ENCODE measurements at regions of chr19 and their contacts with region 1.

Region 1: DNA sequence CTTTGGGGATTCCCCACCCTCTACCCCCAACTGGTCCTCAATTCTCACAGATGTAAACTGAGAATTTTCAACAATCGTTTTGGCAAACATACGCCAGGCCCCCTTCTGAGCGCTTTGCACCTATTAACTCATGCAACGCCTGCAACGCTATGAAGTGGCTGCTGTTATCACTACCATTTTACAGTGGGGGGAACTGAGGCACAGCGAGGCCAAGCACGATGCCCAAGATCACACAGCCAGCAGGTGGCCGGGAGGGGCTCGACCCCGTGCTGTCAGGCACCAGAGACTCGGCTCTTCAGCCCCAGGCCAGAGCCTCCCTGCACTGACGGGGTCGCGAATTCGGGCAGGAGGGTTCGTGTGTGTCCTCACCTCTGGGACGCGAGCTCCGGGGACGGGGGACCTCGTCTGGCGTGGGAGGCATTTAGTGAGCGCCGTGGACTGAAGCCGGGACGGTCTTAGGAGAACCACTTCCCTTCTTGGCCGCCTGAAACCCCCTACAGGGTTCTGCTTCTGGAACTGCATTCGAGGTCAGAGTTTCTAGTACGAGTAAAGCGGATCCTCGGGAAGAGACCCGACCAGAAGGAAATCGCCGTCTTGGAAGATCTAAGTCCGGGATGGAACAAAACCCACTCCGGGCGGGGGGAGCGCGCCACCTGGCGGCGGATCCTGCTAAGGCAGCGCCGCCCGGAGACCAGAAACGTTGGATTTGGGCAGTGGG is 21.0 kb downstream of the ZNF114 start:
- DNase-seq: no peak
- H3K4me3 ChIP-seq: peak overlapping the region; percentile 61
- CTCF ChIP-seq: peak; percentile 95

Region 2: GRCh38 chr19:48255376-48256303 is 35.3 kb before region 1 on chr19 and contains the start of gene CARD8:
- CTCF ChIA-PET with region 1: interaction called, 13 read pairs
- POLR2A ChIA-PET with region 1: no interaction called
- DNase-seq: no peak
- H3K4me3 ChIP-seq: peak within 1 kb of the TSS; percentile 84
- CTCF ChIP-seq: no peak

Region 3: DNA sequence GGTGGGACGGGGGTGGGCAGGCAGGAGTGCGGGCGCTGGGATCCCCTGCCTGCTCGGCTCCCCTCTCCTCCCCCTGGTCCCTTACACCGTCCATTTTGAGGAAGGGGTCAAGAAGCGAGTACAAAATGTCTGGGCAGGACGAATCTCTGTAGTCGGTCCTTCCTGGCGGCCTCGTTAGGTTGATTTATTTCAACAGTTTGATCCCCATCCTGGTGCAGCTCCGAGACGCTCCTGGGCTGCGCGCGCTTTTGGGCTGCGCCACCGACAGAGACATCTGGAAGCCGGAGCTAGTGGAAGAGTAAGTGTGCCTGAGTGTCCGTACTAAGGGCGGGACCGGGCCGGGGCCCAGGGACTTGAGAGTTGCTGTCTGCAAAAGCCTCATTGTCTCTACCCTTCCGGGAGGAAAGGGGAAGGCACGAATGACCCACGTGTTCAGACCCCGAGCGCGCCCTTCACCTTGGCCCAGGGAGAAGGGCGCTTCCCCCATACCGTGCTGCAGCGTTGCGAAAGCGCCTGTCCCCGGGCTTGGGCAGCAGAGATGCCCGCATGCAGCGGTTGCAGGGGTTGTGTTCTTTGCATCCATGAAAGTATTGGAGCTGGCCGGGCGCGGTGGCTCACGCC is 19.3 kb before region 1 on chr19:
- CTCF ChIA-PET with region 1: interaction called, 429 read pairs
- POLR2A ChIA-PET with region 1: no interaction called
- DNase-seq: no peak
- H3K4me3 ChIP-seq: peak overlapping the region; percentile 58
- CTCF ChIP-seq: no peak

Region 4: GRCh38 chr19:48308631-48309586 is 18.0 kb after region 1 on chr19:
- CTCF ChIA-PET with region 1: interaction called, 17 read pairs
- POLR2A ChIA-PET with region 1: no interaction called
- DNase-seq: no peak
- H3K4me3 ChIP-seq: no peak overlapping the region
- CTCF ChIP-seq: peak; percentile 64

Region 5: DNA sequence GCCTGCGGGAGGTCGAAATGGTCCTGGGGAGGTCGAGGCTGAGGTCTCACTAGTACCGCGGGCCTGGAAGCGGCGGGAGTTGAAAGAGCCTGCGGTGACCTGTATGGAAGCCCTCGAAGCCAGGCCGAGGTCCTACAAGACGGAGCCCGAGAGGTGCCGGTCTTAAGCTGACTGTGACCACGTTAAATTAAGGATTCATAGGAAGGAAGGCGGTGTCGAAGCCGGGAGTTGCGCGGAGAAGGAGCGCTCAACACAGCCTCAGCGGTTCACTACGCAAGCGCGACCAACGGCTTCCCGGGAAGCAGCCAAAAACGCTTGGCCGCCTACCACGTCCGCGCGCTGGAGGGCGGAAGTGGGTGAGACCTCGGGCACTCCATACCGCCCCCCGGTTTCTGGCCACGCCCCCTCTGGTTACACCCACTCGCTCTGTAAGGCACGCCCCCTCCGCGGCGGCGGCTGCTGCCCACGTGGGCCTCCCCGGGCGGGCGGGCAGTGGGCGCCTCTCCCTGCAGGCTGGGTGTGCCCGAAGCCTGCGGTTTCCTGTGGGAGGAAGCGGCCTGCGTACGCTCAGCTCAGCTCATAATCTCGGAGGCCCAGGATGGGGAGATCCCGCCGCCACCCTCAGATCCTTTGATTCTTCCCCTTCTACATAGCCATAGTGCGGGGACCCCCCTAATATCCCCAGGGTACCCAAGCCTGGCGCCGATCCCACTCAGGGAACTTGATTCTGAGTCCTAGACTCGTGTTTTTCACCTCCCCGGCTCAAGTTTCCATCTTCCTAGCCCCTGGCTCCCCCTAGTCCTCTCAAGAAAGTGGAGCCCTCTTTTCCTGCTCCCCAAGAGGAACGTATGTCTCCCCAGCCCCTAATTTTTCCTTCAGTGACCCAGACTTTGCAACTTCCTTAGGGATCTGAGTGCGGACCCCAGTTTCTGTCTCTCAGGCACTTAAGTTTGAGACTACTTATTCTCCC is 31.0 kb after region 1 on chr19:
- CTCF ChIA-PET with region 1: interaction called, 14 read pairs
- POLR2A ChIA-PET with region 1: interaction called, 4 read pairs
- DNase-seq: peak; percentile 86
- H3K4me3 ChIP-seq: peak overlapping the region; percentile 67
- CTCF ChIP-seq: no peak

Measured in AG04449 (cell line).